Activated T-helper 1 cell treated with anti-CD3 and anti-CD28 coated beads, Interleukin-12 subunit alpha, Interleukin-12 subunit beta, Interleukin-2, Interleukin-4 antibody, amounts not matched to agents 30 ng/mL and 10 ng/mL and 1 ng/mL, durations not matched to agents 14 hours and 24 hours and 36 hours (primary cell): ENCODE measurements at regions of chr11 and their contacts with region 1.

Region 1: GRCh38 chr11:128172046-128172878 is 415.1 kb downstream of the ETS1 start:
- DNase-seq: peak; percentile 75
- H3K4me3 Mint-ChIP-seq: no peak overlapping the region
- H3K27ac Mint-ChIP-seq: peak overlapping the region; percentile 25
- H3K4me1 Mint-ChIP-seq: peaks cover 25% of the 10 kb centered on the region
- H3K27me3 Mint-ChIP-seq: no peaks in the 10 kb centered on the region

Region 2: GRCh38 chr11:128026596-128026995 is 145.7 kb before region 1 on chr11:
- intact Hi-C with region 1: loop called (anchors 1 kb)
- DNase-seq: no peak
- H3K4me3 Mint-ChIP-seq: no peak overlapping the region
- H3K27ac Mint-ChIP-seq: no peak overlapping the region
- H3K4me1 Mint-ChIP-seq: peaks cover 4% of the 10 kb centered on the region
- H3K27me3 Mint-ChIP-seq: peaks cover 42% of the 10 kb centered on the region

Region 3: GRCh38 chr11:128133501-128133900 is 38.8 kb before region 1 on chr11:
- intact Hi-C with region 1: no loop called
- DNase-seq: no peak
- H3K4me3 Mint-ChIP-seq: no peak overlapping the region
- H3K27ac Mint-ChIP-seq: no peak overlapping the region
- H3K4me1 Mint-ChIP-seq: no peaks in the 10 kb centered on the region
- H3K27me3 Mint-ChIP-seq: peaks cover 8% of the 10 kb centered on the region

Region 4: DNA sequence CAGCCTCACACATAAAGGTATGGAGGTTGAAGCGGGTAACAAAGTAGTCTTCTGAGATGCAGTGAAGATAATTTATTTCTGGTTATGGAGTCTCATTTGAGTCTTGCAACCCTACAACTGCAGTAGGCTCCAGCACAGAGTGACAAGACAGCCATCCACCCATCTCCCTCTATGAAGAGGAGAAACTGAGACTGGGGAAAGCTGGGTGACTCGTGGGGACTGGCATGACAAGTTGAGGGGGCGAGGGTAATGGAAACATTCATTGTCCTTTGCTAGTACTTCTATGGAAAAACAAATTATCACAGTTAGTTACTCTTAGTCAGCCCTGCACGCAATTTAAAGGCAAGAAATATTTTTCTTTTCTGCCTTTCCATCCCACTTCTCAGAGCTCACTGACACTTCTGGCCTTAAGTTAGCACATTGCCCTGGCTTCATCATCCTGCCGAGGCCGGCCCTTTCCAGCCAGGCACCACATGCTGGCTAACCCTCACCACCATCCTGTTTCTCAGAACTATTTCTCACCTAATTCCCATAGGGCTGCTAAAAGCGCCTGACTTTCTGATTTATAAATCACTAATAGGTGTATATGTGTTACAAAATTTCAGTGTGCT is 53.9 kb after region 1 on chr11:
- intact Hi-C with region 1: loop called (anchors 1 kb)
- DNase-seq: no peak
- H3K4me3 Mint-ChIP-seq: peak overlapping the region; percentile 37
- H3K27ac Mint-ChIP-seq: peak overlapping the region; percentile 89
- H3K4me1 Mint-ChIP-seq: peaks cover 44% of the 10 kb centered on the region
- H3K27me3 Mint-ChIP-seq: no peaks in the 10 kb centered on the region

Region 5: GRCh38 chr11:128422576-128423370 is 250.5 kb after region 1 on chr11:
- intact Hi-C with region 1: loop called (anchors 5 kb)
- DNase-seq: peak; percentile 64
- H3K4me3 Mint-ChIP-seq: peak overlapping the region; percentile 69
- H3K27ac Mint-ChIP-seq: peak overlapping the region; percentile 92
- H3K4me1 Mint-ChIP-seq: peaks cover 38% of the 10 kb centered on the region
- H3K27me3 Mint-ChIP-seq: no peaks in the 10 kb centered on the region

Region 6: DNA sequence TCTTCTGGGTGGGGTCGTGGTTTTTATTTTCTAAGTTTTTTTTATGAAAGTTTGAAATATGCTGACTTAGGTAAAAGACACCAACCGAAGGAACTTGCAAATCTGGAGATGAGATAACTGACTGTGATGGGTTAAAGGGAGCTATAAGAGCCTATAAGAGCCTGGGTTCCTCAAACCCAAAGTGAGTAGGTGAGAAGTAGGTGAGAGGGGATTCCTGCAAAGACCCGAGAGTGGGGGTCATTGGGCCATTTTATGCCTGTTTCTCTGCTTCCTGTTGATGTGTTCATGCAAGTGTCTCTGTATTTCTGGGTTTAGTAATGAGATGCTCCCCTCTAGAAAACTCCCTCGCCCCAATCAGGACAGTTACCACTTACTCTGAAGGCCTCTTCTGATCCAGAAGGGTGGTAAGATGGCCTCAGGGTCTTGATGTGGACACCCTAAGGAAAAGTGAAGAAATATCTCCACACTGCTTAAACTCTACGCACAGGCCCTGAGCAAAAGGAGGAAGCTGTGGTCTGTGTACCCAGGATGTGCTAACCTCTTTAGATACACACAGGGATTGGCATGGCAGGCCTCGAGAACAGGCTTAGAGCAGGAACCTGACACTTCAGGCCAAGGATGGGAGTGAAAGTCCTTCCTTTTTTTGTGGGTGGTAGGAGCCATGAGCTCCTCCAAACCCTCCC is 523.4 kb after region 1 on chr11:
- intact Hi-C with region 1: loop called (anchors 5 kb)
- DNase-seq: peak; percentile 38
- H3K4me3 Mint-ChIP-seq: peak overlapping the region; percentile 87
- H3K27ac Mint-ChIP-seq: peak overlapping the region; percentile 91
- H3K4me1 Mint-ChIP-seq: peaks cover 74% of the 10 kb centered on the region
- H3K27me3 Mint-ChIP-seq: peaks cover 15% of the 10 kb centered on the region

Region 7: DNA sequence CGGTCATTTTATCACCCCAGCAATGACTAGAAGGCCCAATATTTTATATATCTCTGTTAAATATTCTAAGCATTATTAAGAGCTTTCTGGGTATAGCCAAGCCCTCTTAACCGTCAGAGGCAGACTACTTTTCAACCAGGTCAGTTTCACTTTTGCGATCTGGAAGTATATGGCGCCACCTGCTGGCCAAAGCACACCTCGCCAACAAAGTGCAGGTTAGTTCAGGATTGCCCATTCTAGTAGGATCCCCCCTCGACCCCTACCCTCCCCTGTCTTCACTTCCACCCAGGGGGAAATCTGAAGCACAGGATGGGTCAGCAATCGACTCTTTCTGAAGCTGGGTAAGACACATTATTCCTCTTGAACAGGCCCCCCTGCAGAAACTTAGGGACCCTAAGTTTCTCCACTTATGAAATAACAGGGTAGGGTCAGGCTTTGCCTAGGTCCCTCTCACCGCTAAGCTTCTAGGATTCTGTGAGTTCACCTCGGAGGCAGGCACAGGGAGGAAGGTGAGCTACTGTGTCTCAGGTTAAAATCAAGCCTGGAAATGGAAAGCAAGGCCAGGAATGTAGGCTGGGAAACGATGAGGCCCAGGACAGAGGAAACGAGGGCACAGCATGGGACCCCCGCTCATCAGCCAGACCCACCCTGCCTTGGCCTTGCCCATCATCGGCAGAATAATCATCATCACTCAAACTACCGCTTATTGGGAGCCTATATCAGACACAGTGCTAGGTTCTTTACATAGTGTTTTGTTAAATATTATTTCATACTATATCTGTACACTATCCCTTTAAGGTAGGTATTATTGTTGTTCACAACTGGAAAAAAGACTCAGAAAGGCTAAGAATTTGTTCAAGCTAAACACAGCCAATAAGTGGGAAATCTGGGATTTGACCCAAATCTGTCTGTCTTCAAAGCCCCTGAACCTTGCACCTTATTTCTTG is 659.2 kb after region 1 on chr11:
- intact Hi-C with region 1: loop called (anchors 1 kb)
- DNase-seq: peak; percentile 75
- H3K4me3 Mint-ChIP-seq: peak overlapping the region; percentile 68
- H3K27ac Mint-ChIP-seq: peak overlapping the region; percentile 90
- H3K4me1 Mint-ChIP-seq: peaks cover 31% of the 10 kb centered on the region
- H3K27me3 Mint-ChIP-seq: peaks cover 9% of the 10 kb centered on the region